Vagina (tissue), 2 donors: ENCODE measurements at regions of chr1 and their contacts with region 1.

Region 1: GRCh38 chr1:9292361-9293240 is at the start of gene SPSB1:
- DNase-seq: no peak
- H3K4me3 ChIP-seq: peak within 1 kb of the TSS; percentile 94 to 98
- H3K27ac ChIP-seq: peak within 1 kb of the TSS; percentile 98
- H3K4me1 ChIP-seq: peaks cover 60% of the 10 kb centered on the region
- H3K27me3 ChIP-seq: no peaks in the 10 kb centered on the region
- CTCF ChIP-seq: no peak
- POLR2A ChIP-seq: peak in 1 of 2 donors; percentile 90
- total RNA-seq, gene SPSB1: 40.0 TPM

Region 2: GRCh38 chr1:9455487-9456234 is 163.1 kb after region 1 on chr1:
- intact Hi-C with region 1: loop called (anchors 5 kb)
- DNase-seq: no peak
- H3K4me3 ChIP-seq: no peak overlapping the region
- H3K27ac ChIP-seq: peak overlapping the region; percentile 48
- H3K4me1 ChIP-seq: peaks cover 19% of the 10 kb centered on the region
- H3K27me3 ChIP-seq: no peaks in the 10 kb centered on the region
- CTCF ChIP-seq: peak; percentile 61 to 75 (median 74)
- POLR2A ChIP-seq: no peak